Activated B cell treated with CpG ODN at 0.5 μM for 24 hours (primary cell): ENCODE measurements at regions of chr1 and their contacts with region 1.

Region 1: GRCh38 chr1:16607433-16607851 is 5.9 kb downstream of the NBPF1 start:
- DNase-seq: no peak
- ATAC-seq: no peak
- H3K4me3 Mint-ChIP-seq: no peak overlapping the region
- H3K27ac Mint-ChIP-seq: no peak overlapping the region
- H3K4me1 Mint-ChIP-seq: no peaks in the 10 kb centered on the region
- H3K27me3 Mint-ChIP-seq: no peaks in the 10 kb centered on the region
- CTCF ChIP-seq: no peak

Region 2: GRCh38 chr1:16386454-16387113 is 220.9 kb before region 1 on chr1:
- CTCF ChIA-PET with region 1: no interaction called
- POLR2A ChIA-PET with region 1: no interaction called
- intact Hi-C with region 1: no loop called
- DNase-seq: no peak
- ATAC-seq: peak; percentile 23
- H3K4me3 Mint-ChIP-seq: peak overlapping the region; percentile 73
- H3K27ac Mint-ChIP-seq: peak overlapping the region; percentile 92
- H3K4me1 Mint-ChIP-seq: peaks cover 79% of the 10 kb centered on the region
- H3K27me3 Mint-ChIP-seq: no peaks in the 10 kb centered on the region
- CTCF ChIP-seq: no peak

Region 3: GRCh38 chr1:16618719-16619118 is 11.3 kb after region 1 on chr1:
- CTCF ChIA-PET with region 1: interaction called, 17 read pairs
- POLR2A ChIA-PET with region 1: interaction called, 4 read pairs
- intact Hi-C with region 1: no loop called
- DNase-seq: peak; percentile 26
- ATAC-seq: no peak
- H3K4me3 Mint-ChIP-seq: no peak overlapping the region
- H3K27ac Mint-ChIP-seq: no peak overlapping the region
- H3K4me1 Mint-ChIP-seq: no peaks in the 10 kb centered on the region
- H3K27me3 Mint-ChIP-seq: no peaks in the 10 kb centered on the region
- CTCF ChIP-seq: no peak